ENCODE measurements at regions of chr9 and their contacts with region 1.

Region 1: GRCh38 chr9:34899535-34900158 is 58.4 kb upstream of the PHF24 start:
- DNase-seq: peak; percentile 62
- ATAC-seq: peak; percentile 100
- H3K4me3 ChIP-seq: no peak overlapping the region
- H3K27ac ChIP-seq: no peak overlapping the region
- H3K4me1 ChIP-seq: no peaks in the 10 kb centered on the region
- H3K27me3 ChIP-seq: no peaks in the 10 kb centered on the region; a peak in 2 of 5 replicates
- CTCF ChIP-seq: peak; percentile 91
- EP300 ChIP-seq: no peak
- POLR2A ChIP-seq: no peak
- RAD21 ChIP-seq: peak; percentile 87

Region 2: DNA sequence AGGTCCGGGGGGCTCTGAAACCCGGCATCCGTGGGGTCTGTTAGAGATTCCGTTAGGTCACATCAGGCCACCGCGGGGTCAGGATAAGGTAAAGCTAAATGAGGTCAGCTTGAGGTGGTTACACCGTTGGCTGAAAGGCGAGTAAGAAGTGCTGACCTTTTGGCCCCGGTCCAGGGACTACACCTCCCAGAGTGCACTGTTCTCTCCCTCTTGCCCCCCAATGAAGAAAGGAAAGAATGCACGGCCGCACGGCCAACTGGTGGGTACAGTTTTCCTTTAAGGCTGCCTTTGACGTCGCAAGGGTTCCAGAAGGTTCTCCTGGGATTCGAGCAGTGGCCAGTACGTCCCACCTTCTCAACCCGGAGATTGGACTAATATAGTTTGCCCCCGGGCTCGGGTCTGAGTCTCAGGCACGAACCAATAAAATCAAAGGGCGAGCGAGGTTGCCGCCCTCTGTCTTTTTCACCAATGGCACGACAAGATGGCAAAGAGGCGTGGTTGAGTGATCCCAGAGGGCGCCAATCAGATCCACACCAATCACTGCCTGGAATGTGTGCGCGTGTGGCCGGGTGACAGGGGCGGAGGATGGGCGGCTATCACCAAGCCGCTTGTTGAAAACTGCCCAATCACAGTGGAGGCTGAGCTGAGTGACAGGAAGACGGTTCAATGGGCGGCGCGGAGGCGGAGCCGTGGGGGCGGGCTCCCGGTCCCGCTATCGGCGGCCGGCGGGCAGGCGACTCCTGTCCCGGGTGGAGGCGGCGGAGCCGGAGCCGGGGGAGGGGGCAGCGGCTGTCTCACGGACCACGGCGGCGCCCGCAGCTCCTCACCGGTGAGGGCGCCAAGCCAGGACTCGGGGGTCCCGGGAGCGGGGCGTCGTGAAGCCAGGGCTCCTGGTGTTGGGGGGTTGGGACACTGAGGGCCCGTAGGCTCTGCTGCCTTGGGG is 89.6 kb after region 1 on chr9 and contains the start of gene DNAJB5:
- CTCF ChIA-PET with region 1: interaction called, 11 read pairs
- POLR2A ChIA-PET with region 1: interaction called, 3 read pairs
- in situ Hi-C with region 1: loop called (anchors 5 kb)
- intact Hi-C with region 1: loop called (anchors 1 kb)
- DNase-seq: peak; percentile 97
- ATAC-seq: peak; percentile 95
- H3K4me3 ChIP-seq: peak within 1 kb of the TSS; percentile 71 to 78 (median 75)
- H3K27ac ChIP-seq: no peak within 1 kb of the TSS
- H3K4me1 ChIP-seq: peaks cover 10% of the 10 kb centered on the region; the same call in 1 of the 2 replicates
- H3K27me3 ChIP-seq: no peaks in the 10 kb centered on the region; a peak in 2 of 5 replicates
- CTCF ChIP-seq: no peak
- EP300 ChIP-seq: no peak
- POLR2A ChIP-seq: peak in 1 of 2 experiments; percentile 46; a peak in 1 of 4 replicates
- RAD21 ChIP-seq: 0 out of 2 replicates have a peak, but pooled peaks have one; percentile 16
- total RNA-seq, gene DNAJB5: 0.69 and 0.90 TPM in 2 replicates

Region 3: GRCh38 chr9:34994260-34994899 is 94.7 kb after region 1 on chr9:
- CTCF ChIA-PET with region 1: interaction called, 10 read pairs
- POLR2A ChIA-PET with region 1: no interaction called
- in situ Hi-C with region 1: loop called (anchors 5 kb)
- intact Hi-C with region 1: loop called (anchors 1 kb)
- DNase-seq: peak; percentile 38
- ATAC-seq: peak; percentile 34; the same call in 2 of the 3 replicates
- H3K4me3 ChIP-seq: no peak overlapping the region
- H3K27ac ChIP-seq: no peak overlapping the region
- H3K4me1 ChIP-seq: peaks cover 39% of the 10 kb centered on the region
- H3K27me3 ChIP-seq: no peaks in the 10 kb centered on the region; a peak in 1 of 5 replicates
- CTCF ChIP-seq: peak; percentile 69
- EP300 ChIP-seq: no peak
- POLR2A ChIP-seq: no peak
- RAD21 ChIP-seq: no peak

Region 4: GRCh38 chr9:35042081-35042604 is 142.5 kb after region 1 on chr9:
- CTCF ChIA-PET with region 1: no interaction called
- POLR2A ChIA-PET with region 1: no interaction called
- in situ Hi-C with region 1: loop called (anchors 5 kb)
- intact Hi-C with region 1: no loop called
- DNase-seq: no peak
- ATAC-seq: no peak
- H3K4me3 ChIP-seq: no peak overlapping the region
- H3K27ac ChIP-seq: no peak overlapping the region
- H3K4me1 ChIP-seq: peaks cover 15% of the 10 kb centered on the region
- H3K27me3 ChIP-seq: no peaks in the 10 kb centered on the region
- CTCF ChIP-seq: no peak
- EP300 ChIP-seq: no peak
- POLR2A ChIP-seq: no peak
- RAD21 ChIP-seq: no peak

Region 5: DNA sequence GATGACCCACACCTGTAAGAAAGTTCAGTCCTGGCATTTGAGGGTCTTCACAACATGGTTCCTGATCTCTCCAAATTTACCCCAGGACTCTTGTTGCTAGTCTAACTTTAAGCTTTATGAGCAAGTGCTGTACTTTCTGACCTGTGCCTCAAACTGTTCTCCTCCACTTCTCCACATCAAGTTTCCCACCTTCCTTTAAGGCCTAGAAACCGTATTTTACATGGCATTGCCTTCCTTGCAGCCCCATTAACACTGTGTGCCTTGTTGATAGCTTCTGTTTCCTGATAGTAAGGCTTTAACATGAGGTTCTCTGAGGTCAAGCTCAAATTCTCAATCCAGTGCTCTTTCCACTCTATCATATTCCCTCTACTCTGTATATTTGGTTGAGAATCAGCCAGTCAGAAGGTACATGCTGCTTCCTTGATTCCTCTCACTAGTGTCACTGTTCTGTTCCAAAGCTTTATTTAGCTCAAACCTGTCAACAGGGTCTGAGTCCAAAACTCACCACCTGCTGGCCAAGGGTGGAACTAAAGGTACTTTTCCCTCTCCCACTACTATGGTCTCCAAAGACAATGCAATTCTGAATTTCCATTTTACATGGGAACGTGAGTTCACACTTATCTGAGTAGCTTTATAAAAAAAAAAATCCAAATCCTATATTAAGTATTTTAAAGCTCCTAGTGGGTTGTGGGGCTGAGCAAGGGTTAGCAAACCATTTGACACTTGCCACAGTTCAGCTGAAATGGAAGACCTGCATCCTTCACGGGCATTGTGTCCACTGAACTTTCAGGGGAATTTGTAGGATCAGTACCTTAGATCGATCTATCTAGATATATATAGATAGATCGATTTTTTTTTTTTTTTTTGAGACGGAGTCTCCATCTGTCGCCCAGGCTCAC is 151.7 kb after region 1 on chr9:
- CTCF ChIA-PET with region 1: interaction called, 7 read pairs
- POLR2A ChIA-PET with region 1: no interaction called
- in situ Hi-C with region 1: no loop called
- intact Hi-C with region 1: loop called (anchors 1 kb)
- DNase-seq: peak; percentile 45
- ATAC-seq: peak; percentile 75
- H3K4me3 ChIP-seq: no peak overlapping the region
- H3K27ac ChIP-seq: no peak overlapping the region
- H3K4me1 ChIP-seq: no peaks in the 10 kb centered on the region
- H3K27me3 ChIP-seq: no peaks in the 10 kb centered on the region
- CTCF ChIP-seq: peak; percentile 73
- EP300 ChIP-seq: no peak
- POLR2A ChIP-seq: no peak
- RAD21 ChIP-seq: no peak

Region 6: GRCh38 chr9:35096035-35096849 is 196.6 kb after region 1 on chr9 and contains the start of gene PIGO:
- CTCF ChIA-PET with region 1: interaction called, 19 read pairs
- POLR2A ChIA-PET with region 1: no interaction called
- in situ Hi-C with region 1: no loop called
- intact Hi-C with region 1: loop called (anchors 1 kb)
- DNase-seq: peak; percentile 83
- ATAC-seq: peak; percentile 93
- H3K4me3 ChIP-seq: peak within 1 kb of the TSS; percentile 77 to 91 (median 83)
- H3K27ac ChIP-seq: peak within 1 kb of the TSS; percentile 98
- H3K4me1 ChIP-seq: peaks cover 26% of the 10 kb centered on the region
- H3K27me3 ChIP-seq: no peaks in the 10 kb centered on the region
- CTCF ChIP-seq: peak; percentile 81
- EP300 ChIP-seq: 0 out of 4 replicates have a peak, but pooled peaks of 1 of the 2 experiments have one; percentile 42
- POLR2A ChIP-seq: peak; percentile 95 to 96
- RAD21 ChIP-seq: peak; percentile 81
- total RNA-seq, gene PIGO: 6.6 and 20.5 TPM in 2 replicates

Region 7: DNA sequence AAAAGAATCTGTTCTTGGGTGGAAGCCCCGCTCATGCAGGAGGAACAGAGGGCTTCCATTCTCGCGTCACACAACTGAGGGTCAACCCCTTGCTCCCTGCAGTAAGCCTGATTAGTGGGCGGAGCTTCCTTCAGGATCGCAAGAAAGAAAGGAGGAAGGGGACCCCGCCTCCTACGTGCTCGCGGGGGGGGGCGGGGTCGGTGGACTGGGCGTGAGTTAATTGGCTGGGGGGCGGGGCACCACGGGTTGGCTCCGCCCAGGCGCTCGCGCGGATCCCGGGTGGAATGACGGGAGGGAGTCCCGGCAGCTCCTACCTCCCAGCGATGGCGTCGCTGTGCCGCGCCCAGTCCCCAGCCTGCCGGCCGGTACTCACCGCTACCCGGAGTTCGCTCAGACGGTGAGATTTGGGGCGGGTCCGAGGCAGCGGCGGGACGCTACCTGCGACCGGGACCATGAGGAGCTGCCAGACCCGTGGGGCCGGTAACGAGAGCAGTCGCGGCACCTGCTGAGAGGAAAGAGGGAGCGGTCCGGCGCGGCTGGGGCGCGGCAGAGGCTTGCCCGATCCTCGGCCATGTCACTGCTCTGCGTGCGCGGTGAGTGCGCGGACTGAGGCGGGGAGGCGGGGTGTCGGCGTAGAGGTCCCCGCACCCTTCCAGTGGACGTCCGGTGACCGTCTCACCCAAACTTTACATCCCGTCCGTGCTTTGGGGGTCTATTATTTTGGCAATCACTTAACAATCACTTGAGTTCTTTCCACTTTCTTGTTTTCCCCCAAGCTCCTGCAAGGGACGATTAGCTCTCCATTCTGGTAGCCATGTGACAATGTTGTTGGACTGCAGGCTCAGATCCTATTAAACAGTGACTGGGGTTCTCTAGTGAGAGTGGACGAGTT is 262.3 kb after region 1 on chr9 and contains the start of gene UNC13B:
- CTCF ChIA-PET with region 1: no interaction called
- POLR2A ChIA-PET with region 1: no interaction called
- in situ Hi-C with region 1: no loop called
- intact Hi-C with region 1: no loop called
- DNase-seq: peak; percentile 93
- ATAC-seq: peak; percentile 97
- H3K4me3 ChIP-seq: peak within 1 kb of the TSS; percentile 78 to 98 (median 85)
- H3K27ac ChIP-seq: peak within 1 kb of the TSS; percentile 75
- H3K4me1 ChIP-seq: peaks cover 43% of the 10 kb centered on the region
- H3K27me3 ChIP-seq: no peaks in the 10 kb centered on the region; a peak in 1 of 5 replicates
- CTCF ChIP-seq: peak; percentile 59
- EP300 ChIP-seq: no peak
- POLR2A ChIP-seq: peak; percentile 82 to 84
- RAD21 ChIP-seq: peak; percentile 32
- total RNA-seq, gene UNC13B: 18.3 and 23.6 TPM in 2 replicates

Region 8: DNA sequence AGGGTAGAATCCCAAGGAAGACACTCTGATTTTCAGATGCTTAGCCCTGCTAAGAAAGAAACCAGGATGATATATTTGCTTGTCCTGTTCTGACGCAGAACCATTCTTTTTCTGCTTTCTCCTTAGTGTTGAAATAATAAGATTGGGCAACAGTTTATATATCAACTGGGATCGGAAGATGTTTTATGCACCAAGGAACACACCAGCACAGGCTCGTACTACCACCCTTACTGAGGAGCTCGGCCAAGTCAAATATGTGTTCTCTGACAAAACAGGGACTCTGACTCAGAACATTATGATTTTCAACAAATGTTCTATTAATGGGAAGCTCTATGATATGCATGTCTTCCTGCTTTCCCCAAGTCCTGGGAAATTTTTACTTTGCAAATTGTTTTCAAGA is 571.2 kb after region 1 on chr9:
- CTCF ChIA-PET with region 1: no interaction called
- POLR2A ChIA-PET with region 1: no interaction called
- in situ Hi-C with region 1: no loop called
- intact Hi-C with region 1: loop called (anchors 10 kb)
- DNase-seq: no peak
- ATAC-seq: no peak
- H3K4me3 ChIP-seq: no peak overlapping the region
- H3K27ac ChIP-seq: no peak overlapping the region
- H3K4me1 ChIP-seq: peaks cover 8% of the 10 kb centered on the region; the same call in 1 of the 2 replicates
- H3K27me3 ChIP-seq: peaks cover 0 to 1% of the 10 kb centered on the region in 2 experiments; a peak in 1 of 5 replicates
- CTCF ChIP-seq: no peak
- EP300 ChIP-seq: no peak
- POLR2A ChIP-seq: no peak
- RAD21 ChIP-seq: no peak